Natural killer cell (primary cell): ENCODE measurements at regions of chr20 and their contacts with region 1.

Region 1: DNA sequence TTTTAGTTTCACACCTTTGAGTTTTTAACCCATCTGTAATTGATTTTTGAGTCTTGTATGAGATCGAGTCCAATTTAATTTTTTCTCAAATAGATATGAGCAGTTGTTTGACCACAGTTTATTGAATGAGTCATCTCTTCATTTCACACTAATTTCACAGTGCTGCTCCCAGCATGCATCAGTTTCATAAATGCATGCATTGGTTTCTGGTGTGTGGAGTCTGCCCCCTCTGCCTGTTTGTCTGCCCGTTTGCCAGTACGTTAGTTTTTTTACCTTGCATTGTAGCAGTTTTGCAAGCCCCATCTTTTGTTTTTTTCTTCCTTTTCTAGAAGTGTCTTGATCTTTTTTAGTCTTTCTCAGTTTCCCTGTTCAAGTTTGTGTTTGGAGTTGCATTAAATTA is 11.9 kb downstream of the SLX4IP start:
- DNase-seq: peak; percentile 35 to 74
- ATAC-seq: peak; percentile 99 to 100 (median 100)
- H3K4me3 ChIP-seq: peak overlapping the region; percentile 8
- H3K4me3 Mint-ChIP-seq: peak overlapping the region; percentile 83
- H3K27ac ChIP-seq: no peak overlapping the region
- H3K27ac Mint-ChIP-seq: peak overlapping the region; percentile 72 to 89
- H3K4me1 ChIP-seq: peaks cover 2% of the 10 kb centered on the region
- H3K4me1 Mint-ChIP-seq: peaks cover 20 to 24% of the 10 kb centered on the region in 2 donors
- H3K27me3 ChIP-seq: no peaks in the 10 kb centered on the region
- H3K27me3 Mint-ChIP-seq: no peaks in the 10 kb centered on the region
- CTCF ChIP-seq: no peak

Region 2: GRCh38 chr20:10434832-10435812 is 11.9 kb before region 1 on chr20 and contains the start of gene SLX4IP:
- intact Hi-C with region 1: loop called (anchors 1 kb)
- DNase-seq: peak; percentile 72 to 94
- ATAC-seq: peak; percentile 64 to 81 (median 66)
- H3K4me3 ChIP-seq: peak within 1 kb of the TSS; percentile 85
- H3K4me3 Mint-ChIP-seq: peak within 1 kb of the TSS; percentile 96
- H3K27ac ChIP-seq: peak within 1 kb of the TSS; percentile 90
- H3K27ac Mint-ChIP-seq: peak within 1 kb of the TSS; percentile 93 to 95
- H3K4me1 ChIP-seq: peaks cover 12% of the 10 kb centered on the region
- H3K4me1 Mint-ChIP-seq: peaks cover 34 to 47% of the 10 kb centered on the region in 2 donors
- H3K27me3 ChIP-seq: no peaks in the 10 kb centered on the region
- H3K27me3 Mint-ChIP-seq: no peaks in the 10 kb centered on the region
- CTCF ChIP-seq: no peak
- total RNA-seq, gene SLX4IP: 2.9 to 5.5 (median 5.2) TPM

Region 3: DNA sequence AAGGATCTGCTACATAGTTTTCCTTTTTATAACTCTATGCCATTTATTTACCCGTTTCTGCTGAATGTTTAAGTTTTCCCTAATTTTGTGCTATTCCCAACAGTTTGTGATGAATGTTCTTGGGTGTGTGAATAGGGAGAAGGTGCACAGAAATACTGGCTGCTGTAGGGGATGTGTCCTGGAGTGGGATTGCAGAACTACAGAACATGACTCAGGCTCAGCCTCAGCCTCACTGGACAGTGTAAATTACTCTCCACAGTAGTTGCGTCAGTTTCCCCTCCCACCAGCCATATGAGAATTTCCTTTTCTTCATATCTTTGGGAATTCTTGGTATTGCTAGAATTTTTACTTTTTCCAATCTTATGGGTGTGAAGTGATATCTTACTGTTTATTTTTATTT is 45.0 kb after region 1 on chr20:
- intact Hi-C with region 1: loop called (anchors 10 kb)
- DNase-seq: no peak
- ATAC-seq: no peak
- H3K4me3 ChIP-seq: no peak overlapping the region
- H3K4me3 Mint-ChIP-seq: no peak overlapping the region
- H3K27ac ChIP-seq: no peak overlapping the region
- H3K27ac Mint-ChIP-seq: peak overlapping the region; percentile 18 to 30
- H3K4me1 ChIP-seq: peaks cover 4% of the 10 kb centered on the region
- H3K4me1 Mint-ChIP-seq: peaks cover 50 to 52% of the 10 kb centered on the region in 2 donors
- H3K27me3 ChIP-seq: no peaks in the 10 kb centered on the region
- H3K27me3 Mint-ChIP-seq: no peaks in the 10 kb centered on the region
- CTCF ChIP-seq: no peak